Activated naive CD4-positive, alpha-beta T cell treated with anti-CD3 and anti-CD28 coated beads, Interleukin-2, amount 10 ng/mL, durations not matched to agents 7 days and 5 days (primary cell): ENCODE measurements at regions of chr4 and their contacts with region 1.

Region 1: DNA sequence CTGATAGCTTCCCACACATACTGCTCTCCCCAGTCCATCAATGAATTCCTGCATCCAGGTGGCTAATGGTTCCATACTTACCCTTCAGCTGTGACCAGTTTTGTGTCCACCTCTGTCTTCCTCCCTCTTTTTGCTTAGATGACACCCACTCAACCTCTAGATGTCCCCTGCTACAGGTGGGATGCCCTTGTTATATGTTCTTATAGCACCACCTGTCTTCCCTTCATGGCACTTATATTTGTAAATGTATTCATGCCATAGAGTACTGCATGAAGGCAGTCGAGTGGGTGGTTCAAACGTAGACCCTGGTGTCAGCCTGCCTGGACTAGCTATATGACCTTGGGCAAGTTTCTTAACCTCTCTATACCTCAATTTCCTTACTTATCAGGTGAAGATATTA is 6.5 kb upstream of the USP46 start:
- DNase-seq: no peak
- H3K4me3 Mint-ChIP-seq: no peak overlapping the region
- H3K27ac Mint-ChIP-seq: no peak overlapping the region
- H3K4me1 Mint-ChIP-seq: peaks cover 2% of the 10 kb centered on the region
- H3K27me3 Mint-ChIP-seq: peaks cover 47% of the 10 kb centered on the region

Region 2: GRCh38 chr4:52477191-52477780 is 188.3 kb before region 1 on chr4:
- CTCF ChIA-PET with region 1: no interaction called
- DNase-seq: no peak
- H3K4me3 Mint-ChIP-seq: no peak overlapping the region
- H3K27ac Mint-ChIP-seq: no peak overlapping the region
- H3K4me1 Mint-ChIP-seq: no peaks in the 10 kb centered on the region
- H3K27me3 Mint-ChIP-seq: no peaks in the 10 kb centered on the region

Region 3: GRCh38 chr4:52545099-52546069 is 120.2 kb before region 1 on chr4:
- CTCF ChIA-PET with region 1: interaction called, 12 read pairs
- DNase-seq: peak; percentile 70
- H3K4me3 Mint-ChIP-seq: no peak overlapping the region
- H3K27ac Mint-ChIP-seq: no peak overlapping the region
- H3K4me1 Mint-ChIP-seq: no peaks in the 10 kb centered on the region
- H3K27me3 Mint-ChIP-seq: peaks cover 11% of the 10 kb centered on the region

Region 4: GRCh38 chr4:52718123-52718522 is 52.5 kb after region 1 on chr4:
- CTCF ChIA-PET with region 1: no interaction called
- DNase-seq: no peak
- H3K4me3 Mint-ChIP-seq: no peak overlapping the region
- H3K27ac Mint-ChIP-seq: no peak overlapping the region
- H3K4me1 Mint-ChIP-seq: peaks cover 40% of the 10 kb centered on the region
- H3K27me3 Mint-ChIP-seq: no peaks in the 10 kb centered on the region